Sigmoid colon (tissue), 7 donors: ENCODE measurements at regions of chr11 and their contacts with region 1.

Region 1: DNA sequence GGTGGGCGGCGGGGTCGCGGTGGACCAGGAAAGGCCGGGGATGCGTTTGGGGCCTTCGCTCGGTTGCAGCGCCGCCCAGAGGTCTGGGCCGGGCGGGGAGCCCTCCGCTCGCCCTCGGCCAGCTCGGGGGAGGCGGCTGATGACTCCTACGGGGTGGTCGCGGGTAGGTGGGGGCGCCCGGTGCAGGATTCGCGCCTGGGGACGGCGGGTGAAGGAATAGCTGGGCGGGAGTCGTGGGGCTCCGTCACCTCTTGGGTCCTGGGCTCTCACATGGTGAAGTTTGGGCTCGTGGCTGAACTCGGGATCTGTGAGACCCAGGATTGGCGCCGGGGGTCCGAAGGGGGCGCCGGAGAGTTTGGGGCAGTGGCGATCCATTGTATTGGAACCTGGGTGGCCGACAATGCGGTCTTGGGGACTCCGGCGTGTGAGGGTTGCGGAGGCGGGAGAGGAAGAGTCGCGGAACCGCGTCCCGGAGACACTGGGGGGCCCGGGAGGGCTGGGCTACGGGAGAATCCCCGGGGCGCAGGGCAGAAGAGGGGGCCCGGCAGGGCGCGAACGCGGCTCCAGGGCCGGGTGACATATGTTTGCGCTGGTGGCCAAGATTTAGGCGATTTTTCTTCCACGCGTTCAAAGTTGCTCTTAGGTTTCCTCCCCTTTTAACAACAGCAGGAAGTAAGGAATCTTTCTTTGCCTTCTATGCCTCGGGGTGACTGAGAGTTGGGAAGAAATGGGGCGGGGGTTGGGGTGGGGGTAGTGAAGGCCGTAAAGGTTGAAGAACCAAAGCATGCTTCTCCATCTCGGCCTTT is 935 bp downstream of the QSER1 start:
- DNase-seq: peak; percentile 68
- H3K4me3 ChIP-seq: peak overlapping the region; percentile 83 to 97 (median 92)
- H3K27ac ChIP-seq: peak overlapping the region; percentile 93 to 99 (median 96)
- H3K4me1 ChIP-seq: peaks cover 0 to 27% (median 18%) of the 10 kb centered on the region in 4 donors
- H3K27me3 ChIP-seq: no peaks in the 10 kb centered on the region
- CTCF ChIP-seq: peak in 3 of 4 experiments; percentile 6 to 49 (median 28)
- EP300 ChIP-seq: no peak
- POLR2A ChIP-seq: no peak

Region 2: DNA sequence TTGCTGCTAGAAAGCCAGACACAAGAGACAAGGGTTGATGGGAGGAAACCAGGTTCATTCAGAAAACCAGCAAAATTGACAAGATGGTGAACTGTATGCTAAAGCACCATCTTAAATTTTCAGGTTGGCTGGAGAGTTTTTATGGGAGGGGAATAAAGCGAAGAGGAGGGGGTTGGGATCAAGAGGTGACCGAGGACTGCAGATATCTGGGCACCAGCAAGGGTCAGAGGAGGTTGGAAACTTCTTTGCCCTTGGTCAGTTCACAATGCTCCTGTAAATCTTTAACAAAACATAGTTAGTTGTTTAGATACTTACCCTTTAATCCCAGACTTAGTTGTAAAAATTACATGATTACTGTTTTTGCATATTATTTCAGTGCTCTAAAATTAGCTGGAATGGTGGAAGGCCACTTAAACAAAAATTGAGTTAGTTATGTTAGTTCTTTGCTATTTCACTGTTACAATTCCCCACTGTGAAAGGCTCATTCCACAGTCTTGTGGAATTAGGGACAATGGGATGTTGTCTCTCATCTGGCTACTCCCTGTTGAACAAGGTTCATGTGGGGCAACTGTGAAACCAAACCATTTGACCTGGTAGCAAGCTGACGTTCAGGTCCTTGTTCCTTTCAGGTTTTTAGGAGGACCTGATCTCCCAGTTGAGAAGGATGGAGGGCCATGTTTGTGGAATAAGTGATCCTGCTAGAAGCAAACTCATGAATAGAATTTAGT is 31.5 kb before region 1 on chr11:
- intact Hi-C with region 1: no loop called
- DNase-seq: no peak
- H3K4me3 ChIP-seq: no peak overlapping the region
- H3K27ac ChIP-seq: no peak overlapping the region
- H3K4me1 ChIP-seq: no peaks in the 10 kb centered on the region
- H3K27me3 ChIP-seq: no peaks in the 10 kb centered on the region
- CTCF ChIP-seq: no peak
- EP300 ChIP-seq: no peak
- POLR2A ChIP-seq: no peak

Region 3: GRCh38 chr11:33039274-33040032 is 145.9 kb after region 1 on chr11 and contains the start of gene TCP11L1:
- intact Hi-C with region 1: loop called (anchors 2 kb)
- DNase-seq: peak; percentile 96
- H3K4me3 ChIP-seq: peak within 1 kb of the TSS; percentile 72 to 98 (median 79)
- H3K27ac ChIP-seq: peak within 1 kb of the TSS; percentile 97 to 100 (median 98)
- H3K4me1 ChIP-seq: peaks cover 0 to 24% (median 21%) of the 10 kb centered on the region in 4 donors
- H3K27me3 ChIP-seq: no peaks in the 10 kb centered on the region
- CTCF ChIP-seq: no peak
- EP300 ChIP-seq: no peak
- POLR2A ChIP-seq: peak; percentile 28 to 45
- total RNA-seq, gene TCP11L1: 38.7 to 70.3 (median 42.7) TPM

Region 4: GRCh38 chr11:33452836-33453624 is 559.5 kb after region 1 on chr11:
- intact Hi-C with region 1: no loop called
- DNase-seq: no peak
- H3K4me3 ChIP-seq: no peak overlapping the region
- H3K27ac ChIP-seq: no peak overlapping the region
- H3K4me1 ChIP-seq: no peaks in the 10 kb centered on the region
- H3K27me3 ChIP-seq: no peaks in the 10 kb centered on the region
- CTCF ChIP-seq: no peak
- EP300 ChIP-seq: no peak
- POLR2A ChIP-seq: no peak